Panc1 (cell line): ENCODE measurements at regions of chr9 and their contacts with region 1.

Region 1: GRCh38 chr9:115591584-115591984 is 473.6 kb upstream of the TNC start:
- DNase-seq: peak; percentile 62
- ATAC-seq: peak; percentile 59
- H3K4me3 ChIP-seq: no peak overlapping the region
- H3K27ac ChIP-seq: no peak overlapping the region
- H3K4me1 ChIP-seq: peaks cover 6% of the 10 kb centered on the region
- H3K27me3 ChIP-seq: no peaks in the 10 kb centered on the region
- CTCF ChIP-seq: peak; percentile 28; the same call in 1 of the 2 replicates

Region 2: GRCh38 chr9:115883457-115884329 is 292.1 kb after region 1 on chr9:
- CTCF ChIA-PET with region 1: interaction called, 3 read pairs
- POLR2A ChIA-PET with region 1: no interaction called
- in situ Hi-C with region 1: no loop called
- intact Hi-C with region 1: loop called (anchors 5 kb)
- DNase-seq: no peak
- ATAC-seq: no peak; the same call in 1 of the 2 replicates
- H3K4me3 ChIP-seq: no peak overlapping the region
- H3K27ac ChIP-seq: no peak overlapping the region
- H3K4me1 ChIP-seq: no peaks in the 10 kb centered on the region
- H3K27me3 ChIP-seq: no peaks in the 10 kb centered on the region
- CTCF ChIP-seq: peak; percentile 53

Region 3: DNA sequence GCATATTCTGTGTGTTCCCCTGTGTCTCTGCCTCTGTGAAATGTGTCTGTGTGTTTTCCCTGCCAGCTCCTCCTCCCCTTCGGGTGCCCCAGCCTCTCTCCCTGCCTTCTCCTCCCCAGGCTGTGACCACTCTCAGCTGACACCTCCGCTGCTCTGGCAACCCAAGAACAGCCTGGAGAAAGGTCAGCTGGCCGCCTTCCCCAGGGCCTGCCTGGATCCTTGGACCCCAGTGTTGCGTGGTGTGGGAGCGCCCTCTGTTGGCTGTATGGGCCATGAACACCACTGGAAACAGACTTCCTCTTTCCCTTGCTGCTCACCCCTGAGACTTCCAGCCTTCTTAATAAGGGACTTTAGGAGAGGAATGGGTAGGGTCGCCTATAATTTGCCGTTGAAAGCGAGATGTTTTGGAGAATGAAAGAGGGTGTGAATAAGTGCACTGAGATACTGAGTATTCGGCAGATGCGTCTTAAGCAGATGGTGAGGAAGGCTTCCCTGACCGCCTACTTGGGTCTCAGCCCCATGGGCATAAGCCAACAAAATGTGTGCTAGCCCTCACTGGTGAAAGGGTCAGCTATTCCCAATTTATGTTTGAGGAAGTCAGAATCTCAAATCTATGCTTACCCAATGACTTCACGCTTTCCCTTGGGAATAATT is 980.6 kb after region 1 on chr9:
- CTCF ChIA-PET with region 1: no interaction called
- POLR2A ChIA-PET with region 1: no interaction called
- in situ Hi-C with region 1: no loop called
- intact Hi-C with region 1: loop called (anchors 5 kb)
- DNase-seq: no peak
- ATAC-seq: peak; percentile 87
- H3K4me3 ChIP-seq: no peak overlapping the region
- H3K27ac ChIP-seq: no peak overlapping the region
- H3K4me1 ChIP-seq: peaks cover 6% of the 10 kb centered on the region; the same call in 1 of the 2 replicates
- H3K27me3 ChIP-seq: no peaks in the 10 kb centered on the region
- CTCF ChIP-seq: peak; percentile 80

Region 4: DNA sequence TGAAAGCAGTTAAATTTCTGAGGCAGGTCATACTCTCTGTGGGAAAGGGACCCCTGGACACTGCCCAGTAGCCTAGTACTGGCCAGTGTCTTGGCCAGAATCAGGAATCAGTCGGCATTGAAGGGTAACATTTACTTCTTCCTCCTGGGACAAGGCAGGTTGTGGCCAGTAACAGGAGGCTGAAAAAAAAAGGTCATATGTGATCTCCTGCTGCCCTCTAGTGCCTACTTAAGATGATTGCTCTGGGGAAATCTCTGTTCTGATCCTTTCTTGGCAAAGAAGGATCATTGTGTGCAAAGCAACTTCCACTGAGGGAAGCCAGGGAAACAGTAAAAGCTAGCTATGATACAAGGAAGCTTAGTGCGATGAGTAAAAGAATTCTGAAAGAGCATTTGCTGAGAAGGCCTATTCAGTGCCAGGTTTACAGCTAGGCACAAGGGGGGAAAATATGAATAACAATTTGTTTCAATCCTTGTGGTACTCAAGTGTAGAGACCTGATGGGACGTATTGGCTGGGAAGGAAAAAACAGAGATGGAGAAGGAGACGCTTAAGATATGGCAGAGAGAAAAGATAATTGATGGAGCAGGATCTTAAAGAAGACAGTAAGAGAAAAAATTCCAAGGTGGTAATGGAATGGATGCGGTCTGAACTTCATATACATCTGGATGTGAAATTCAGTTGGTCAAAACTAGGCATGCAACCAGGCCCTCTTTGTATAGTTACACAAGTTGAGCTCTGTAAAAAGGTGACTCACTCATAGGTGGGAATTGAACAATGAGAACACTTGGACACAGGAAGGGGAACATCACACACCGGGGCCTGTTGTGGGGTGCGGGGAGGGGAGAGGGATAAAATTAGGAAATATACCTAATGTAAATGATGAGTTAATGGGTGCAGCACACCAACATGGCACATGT is 1069.7 kb after region 1 on chr9:
- CTCF ChIA-PET with region 1: no interaction called
- POLR2A ChIA-PET with region 1: no interaction called
- in situ Hi-C with region 1: no loop called
- intact Hi-C with region 1: loop called (anchors 5 kb)
- DNase-seq: peak; percentile 35
- ATAC-seq: peak; percentile 80
- H3K4me3 ChIP-seq: no peak overlapping the region
- H3K27ac ChIP-seq: no peak overlapping the region
- H3K4me1 ChIP-seq: no peaks in the 10 kb centered on the region
- H3K27me3 ChIP-seq: no peaks in the 10 kb centered on the region
- CTCF ChIP-seq: peak; percentile 70